G401 (cell line): ENCODE measurements at regions of chr1 and their contacts with region 1.

Region 1: DNA sequence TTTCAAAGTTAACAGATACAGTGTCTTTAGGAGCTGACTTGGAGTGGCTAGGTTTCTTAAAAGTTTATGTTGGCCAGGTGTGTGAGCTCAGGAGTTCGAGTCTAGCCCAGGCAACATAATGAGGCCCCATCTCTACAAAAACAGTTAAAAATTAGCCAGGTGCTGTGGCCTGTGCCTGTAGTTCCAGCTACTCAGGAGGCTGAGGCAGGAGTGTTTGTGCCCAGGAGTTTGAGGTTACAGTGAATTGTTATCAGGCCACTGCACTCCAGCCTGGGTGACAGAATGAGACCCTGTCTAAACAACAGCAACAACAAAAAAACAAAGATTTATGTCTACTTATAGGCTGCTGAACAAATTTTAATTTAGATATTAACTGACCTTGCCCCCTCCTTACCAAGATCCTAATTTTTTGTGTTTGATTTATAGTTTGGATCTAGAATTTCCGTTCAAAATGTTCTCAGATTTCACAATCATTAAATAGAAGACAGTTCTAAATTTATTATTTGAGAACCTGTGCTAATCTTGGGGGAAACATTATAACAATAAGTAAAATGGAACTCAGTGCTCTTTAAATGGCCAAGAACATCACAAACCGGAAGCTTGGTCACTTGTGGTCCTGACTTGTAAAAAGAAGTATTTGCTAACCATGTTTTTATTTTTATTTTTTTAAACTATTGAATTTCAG is 67.8 kb downstream of the POU2F1 start:
- DNase-seq: no peak

Region 2: GRCh38 chr1:167121375-167122120 is 167.0 kb before region 1 on chr1:
- in situ Hi-C with region 1: no loop called
- DNase-seq: peak; percentile 87

Region 3: DNA sequence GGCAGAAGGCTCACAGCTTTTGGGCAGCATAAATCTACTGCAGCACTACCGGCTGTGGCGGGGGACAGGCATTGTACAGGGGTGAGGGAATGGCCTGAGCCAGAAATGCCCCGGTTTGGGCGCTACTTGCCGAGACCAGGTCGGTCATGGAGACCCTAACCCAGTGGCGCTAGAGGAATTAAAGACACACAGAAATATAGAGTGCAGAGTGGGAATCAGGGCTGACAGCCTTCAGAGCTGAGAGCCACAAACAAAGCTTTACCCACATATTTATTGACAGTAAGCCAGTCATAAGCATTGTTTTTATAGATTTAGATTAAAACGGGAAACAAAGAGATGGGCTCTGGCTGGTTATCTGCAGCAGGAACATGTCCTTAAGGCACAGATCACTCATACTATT is 34.0 kb after region 1 on chr1:
- in situ Hi-C with region 1: loop called (anchors 5 kb)
- DNase-seq: no peak

Region 4: DNA sequence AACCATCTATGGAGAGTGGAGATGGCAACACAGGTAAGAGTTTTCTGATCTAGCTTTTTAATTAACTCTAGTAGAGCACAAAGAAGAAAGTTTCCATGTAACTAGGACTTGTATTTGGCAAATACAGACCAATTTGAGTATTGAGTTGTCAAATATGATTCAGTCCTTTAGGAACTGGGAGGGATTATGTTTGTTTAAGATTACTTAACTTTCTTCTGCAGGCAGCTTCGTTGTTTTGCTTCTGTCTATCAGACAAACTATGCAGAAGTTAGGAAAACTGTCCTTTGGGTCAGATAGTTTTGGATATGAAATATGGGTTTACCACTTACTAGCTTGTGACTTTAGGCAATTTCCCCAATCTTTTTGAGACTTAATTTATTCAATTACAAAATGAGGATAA is 44.0 kb after region 1 on chr1:
- in situ Hi-C with region 1: no loop called
- DNase-seq: no peak

Region 5: DNA sequence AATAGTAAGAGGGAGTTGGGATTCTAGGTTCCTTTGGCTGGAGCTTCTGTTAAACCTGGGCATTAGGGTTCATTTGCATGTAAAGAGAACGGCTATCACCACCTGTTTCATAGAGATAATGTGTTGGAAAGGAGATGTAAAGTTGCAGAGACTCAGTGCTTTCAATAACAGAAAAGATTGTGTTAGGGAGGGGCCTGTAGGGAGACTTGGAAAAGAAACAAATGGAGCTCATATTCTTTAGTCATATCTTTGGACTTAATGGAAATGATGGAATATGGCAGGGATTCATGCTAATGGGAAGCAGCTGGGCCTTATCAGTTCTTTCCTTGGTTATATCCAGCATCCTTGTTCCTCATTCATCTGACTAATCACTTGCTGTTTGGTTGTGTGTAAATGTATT is 84.9 kb after region 1 on chr1:
- in situ Hi-C with region 1: loop called (anchors 5 kb)
- DNase-seq: no peak